Caco-2 (cell line): ENCODE measurements at regions of chr3 and their contacts with region 1.

Region 1: DNA sequence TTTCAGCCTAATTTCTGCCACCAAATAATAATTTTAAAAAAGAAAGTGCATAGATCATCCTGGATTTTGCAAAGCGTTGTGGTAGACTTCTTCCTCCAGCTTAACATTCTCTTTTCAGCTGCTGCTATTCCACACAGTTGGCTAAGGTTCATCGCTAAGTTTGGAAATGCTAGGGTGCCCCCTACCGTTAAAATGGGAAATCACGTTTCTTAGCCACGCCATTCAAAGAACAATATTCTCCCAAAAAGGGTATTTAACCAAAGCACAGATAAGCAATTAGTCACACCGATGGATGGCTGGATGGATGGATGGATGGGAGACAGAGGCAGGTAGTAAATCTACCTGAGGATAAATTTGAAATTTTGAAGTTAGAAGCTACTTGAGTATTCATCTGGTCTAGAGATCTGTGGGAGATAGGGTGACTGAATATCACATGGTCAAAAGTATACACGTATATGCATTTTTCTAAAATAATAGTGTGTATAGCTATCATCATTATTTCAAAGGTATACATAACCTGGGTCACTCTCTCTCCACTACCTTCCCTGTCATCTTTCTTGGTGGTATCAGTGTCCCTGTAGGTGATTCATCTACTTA is 67.2 kb downstream of the EFHB start:
- DNase-seq: peak in 1 of 2 experiments; percentile 67
- H3K4me3 ChIP-seq: no peak overlapping the region
- H3K4me3 Mint-ChIP-seq: no peak overlapping the region
- H3K27ac Mint-ChIP-seq: no peak overlapping the region
- H3K4me1 ChIP-seq: no peaks in the 10 kb centered on the region
- H3K4me1 Mint-ChIP-seq: no peaks in the 10 kb centered on the region
- H3K27me3 ChIP-seq: no peaks in the 10 kb centered on the region
- H3K27me3 Mint-ChIP-seq: peaks cover 11% of the 10 kb centered on the region
- CTCF ChIP-seq: peak; percentile 57 to 67

Region 2: GRCh38 chr3:19065027-19065426 is 801.8 kb before region 1 on chr3:
- CTCF ChIA-PET with region 1: no interaction called
- POLR2A ChIA-PET with region 1: no interaction called
- intact Hi-C with region 1: loop called (anchors 1 kb)
- DNase-seq: peak in 1 of 2 experiments; percentile 2
- H3K4me3 ChIP-seq: no peak overlapping the region
- H3K4me3 Mint-ChIP-seq: no peak overlapping the region
- H3K27ac Mint-ChIP-seq: no peak overlapping the region
- H3K4me1 ChIP-seq: no peaks in the 10 kb centered on the region
- H3K4me1 Mint-ChIP-seq: no peaks in the 10 kb centered on the region
- H3K27me3 ChIP-seq: no peaks in the 10 kb centered on the region
- H3K27me3 Mint-ChIP-seq: no peaks in the 10 kb centered on the region
- CTCF ChIP-seq: peak; percentile 45 to 58

Region 3: GRCh38 chr3:19348929-19349564 is 517.8 kb before region 1 on chr3:
- CTCF ChIA-PET with region 1: interaction called, 15 read pairs
- POLR2A ChIA-PET with region 1: no interaction called
- intact Hi-C with region 1: no loop called
- DNase-seq: peak in 1 of 2 experiments; percentile 23
- H3K4me3 ChIP-seq: no peak overlapping the region
- H3K4me3 Mint-ChIP-seq: no peak overlapping the region
- H3K27ac Mint-ChIP-seq: no peak overlapping the region
- H3K4me1 ChIP-seq: no peaks in the 10 kb centered on the region
- H3K4me1 Mint-ChIP-seq: no peaks in the 10 kb centered on the region
- H3K27me3 ChIP-seq: no peaks in the 10 kb centered on the region
- H3K27me3 Mint-ChIP-seq: peaks cover 15% of the 10 kb centered on the region
- CTCF ChIP-seq: peak; percentile 53 to 79

Region 4: DNA sequence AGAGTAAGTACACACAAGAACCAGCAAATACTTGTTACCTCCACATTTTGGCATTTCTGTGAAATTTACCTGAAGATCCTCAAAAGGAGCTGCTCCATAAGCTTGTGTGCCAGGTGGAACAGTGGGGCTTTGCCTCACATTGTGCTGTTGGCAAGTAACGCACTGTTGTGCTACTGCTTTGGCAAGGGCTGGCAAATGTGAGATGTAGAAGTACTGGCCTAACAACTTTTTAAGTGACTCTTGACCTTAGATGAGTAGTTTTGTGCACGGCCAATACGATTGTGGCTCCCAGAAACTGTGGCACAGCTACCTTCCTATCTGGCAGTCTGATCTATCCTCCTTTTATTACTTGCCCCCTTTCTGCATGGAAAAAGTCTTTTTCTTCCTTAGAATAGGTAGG is 381.6 kb before region 1 on chr3:
- CTCF ChIA-PET with region 1: no interaction called
- POLR2A ChIA-PET with region 1: no interaction called
- intact Hi-C with region 1: loop called (anchors 10 kb)
- DNase-seq: no peak
- H3K4me3 ChIP-seq: no peak overlapping the region
- H3K4me3 Mint-ChIP-seq: no peak overlapping the region
- H3K27ac Mint-ChIP-seq: no peak overlapping the region
- H3K4me1 ChIP-seq: no peaks in the 10 kb centered on the region
- H3K4me1 Mint-ChIP-seq: no peaks in the 10 kb centered on the region
- H3K27me3 ChIP-seq: no peaks in the 10 kb centered on the region
- H3K27me3 Mint-ChIP-seq: peaks cover 6% of the 10 kb centered on the region
- CTCF ChIP-seq: no peak

Region 5: DNA sequence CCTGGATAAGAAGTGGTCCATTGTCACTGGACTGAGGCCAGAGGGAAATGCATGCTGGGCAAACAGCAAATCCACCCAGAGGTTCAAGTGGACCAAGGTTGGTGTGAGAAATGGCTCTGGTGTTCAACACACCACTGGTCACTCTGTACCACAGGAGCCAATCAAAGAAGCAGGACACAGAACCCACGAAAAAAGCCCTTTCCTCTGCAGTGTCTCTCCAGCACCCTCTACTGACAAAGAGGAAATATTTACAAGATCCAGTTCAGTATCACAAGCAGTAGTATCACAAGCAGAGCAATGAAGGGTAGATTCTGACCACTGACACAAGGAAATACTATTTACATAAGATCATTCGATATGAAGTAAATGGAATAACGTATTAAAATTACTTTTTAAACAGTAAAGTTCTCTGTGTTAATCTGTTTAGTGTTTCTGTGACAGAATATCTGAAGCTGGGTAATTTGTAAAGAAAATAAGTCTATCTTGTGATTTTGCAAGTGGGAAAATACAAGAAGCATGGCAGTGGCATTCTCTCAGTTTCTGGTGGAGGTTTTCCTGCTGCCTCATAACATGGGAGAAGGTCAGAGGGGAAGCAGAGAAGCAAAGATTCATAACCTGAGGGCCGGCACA is 323.5 kb before region 1 on chr3:
- CTCF ChIA-PET with region 1: no interaction called
- POLR2A ChIA-PET with region 1: no interaction called
- intact Hi-C with region 1: loop called (anchors 1 kb)
- DNase-seq: peak; percentile 18 to 36
- H3K4me3 ChIP-seq: no peak overlapping the region
- H3K4me3 Mint-ChIP-seq: no peak overlapping the region
- H3K27ac Mint-ChIP-seq: no peak overlapping the region
- H3K4me1 ChIP-seq: no peaks in the 10 kb centered on the region
- H3K4me1 Mint-ChIP-seq: no peaks in the 10 kb centered on the region
- H3K27me3 ChIP-seq: no peaks in the 10 kb centered on the region
- H3K27me3 Mint-ChIP-seq: peaks cover 3% of the 10 kb centered on the region
- CTCF ChIP-seq: peak; percentile 56 to 64

Region 6: DNA sequence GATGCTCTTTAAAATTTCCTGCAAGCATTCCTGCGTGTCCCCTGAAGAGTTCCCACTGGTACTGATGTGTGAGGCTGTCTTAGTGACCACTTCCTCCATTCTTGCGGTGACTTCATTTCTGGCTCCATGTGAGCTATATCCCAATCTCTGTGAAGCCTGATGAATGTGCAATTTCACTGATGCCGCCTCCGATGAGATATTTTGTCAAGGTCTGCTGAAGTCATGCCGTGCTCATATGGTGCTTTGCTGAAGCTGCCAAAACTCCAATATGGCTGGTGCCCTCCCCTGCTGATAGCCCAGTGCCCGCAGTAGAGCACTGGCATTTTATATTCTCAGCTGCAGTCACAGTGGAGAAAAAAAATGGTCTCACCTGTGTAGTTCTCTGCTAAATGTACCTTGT is 204.4 kb before region 1 on chr3:
- CTCF ChIA-PET with region 1: interaction called, 3 read pairs
- POLR2A ChIA-PET with region 1: no interaction called
- intact Hi-C with region 1: loop called (anchors 10 kb)
- DNase-seq: no peak
- H3K4me3 ChIP-seq: no peak overlapping the region
- H3K4me3 Mint-ChIP-seq: no peak overlapping the region
- H3K27ac Mint-ChIP-seq: no peak overlapping the region
- H3K4me1 ChIP-seq: no peaks in the 10 kb centered on the region
- H3K4me1 Mint-ChIP-seq: no peaks in the 10 kb centered on the region
- H3K27me3 ChIP-seq: no peaks in the 10 kb centered on the region
- H3K27me3 Mint-ChIP-seq: peaks cover 3% of the 10 kb centered on the region
- CTCF ChIP-seq: no peak

Region 7: GRCh38 chr3:19725000-19725399 is 141.8 kb before region 1 on chr3:
- CTCF ChIA-PET with region 1: interaction called, 3 read pairs
- POLR2A ChIA-PET with region 1: no interaction called
- intact Hi-C with region 1: loop called (anchors 1 kb)
- DNase-seq: no peak
- H3K4me3 ChIP-seq: no peak overlapping the region
- H3K4me3 Mint-ChIP-seq: no peak overlapping the region
- H3K27ac Mint-ChIP-seq: no peak overlapping the region
- H3K4me1 ChIP-seq: no peaks in the 10 kb centered on the region
- H3K4me1 Mint-ChIP-seq: no peaks in the 10 kb centered on the region
- H3K27me3 ChIP-seq: no peaks in the 10 kb centered on the region
- H3K27me3 Mint-ChIP-seq: peaks cover 3% of the 10 kb centered on the region
- CTCF ChIP-seq: no peak

Region 8: DNA sequence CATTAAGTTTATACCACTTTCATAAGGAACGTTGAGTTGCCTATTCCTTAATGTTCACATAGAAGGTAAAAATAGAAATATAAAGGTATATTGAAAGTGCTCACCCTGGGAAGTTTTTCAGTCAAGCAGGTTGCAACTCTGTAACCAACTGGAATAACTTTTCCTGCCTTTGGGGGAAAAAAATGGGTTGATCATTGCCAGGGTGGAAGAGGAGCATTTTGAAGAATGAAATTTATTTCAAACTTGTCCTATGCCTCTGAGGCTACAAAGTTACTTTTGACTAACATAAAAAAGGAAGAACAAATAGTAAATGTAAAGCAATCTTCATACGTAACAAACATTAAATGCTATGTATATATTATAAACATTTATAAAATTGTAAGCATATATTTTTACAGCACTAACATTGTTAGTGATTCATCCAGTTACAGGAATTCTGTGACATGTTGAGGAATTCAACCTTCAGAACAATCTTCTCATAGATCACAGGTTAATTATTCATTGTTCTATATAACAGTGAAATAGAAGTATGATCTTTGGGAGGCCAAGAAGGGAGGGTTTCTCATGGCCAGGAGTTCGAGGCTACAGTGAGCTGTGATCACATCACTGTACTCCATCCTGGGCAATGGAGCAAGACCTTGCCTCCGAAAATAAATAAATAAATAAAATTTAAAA is 53.7 kb after region 1 on chr3:
- CTCF ChIA-PET with region 1: no interaction called
- POLR2A ChIA-PET with region 1: no interaction called
- intact Hi-C with region 1: no loop called
- DNase-seq: no peak
- H3K4me3 ChIP-seq: no peak overlapping the region
- H3K4me3 Mint-ChIP-seq: no peak overlapping the region
- H3K27ac Mint-ChIP-seq: no peak overlapping the region
- H3K4me1 ChIP-seq: no peaks in the 10 kb centered on the region
- H3K4me1 Mint-ChIP-seq: no peaks in the 10 kb centered on the region
- H3K27me3 ChIP-seq: no peaks in the 10 kb centered on the region
- H3K27me3 Mint-ChIP-seq: no peaks in the 10 kb centered on the region
- CTCF ChIP-seq: no peak

Region 9: DNA sequence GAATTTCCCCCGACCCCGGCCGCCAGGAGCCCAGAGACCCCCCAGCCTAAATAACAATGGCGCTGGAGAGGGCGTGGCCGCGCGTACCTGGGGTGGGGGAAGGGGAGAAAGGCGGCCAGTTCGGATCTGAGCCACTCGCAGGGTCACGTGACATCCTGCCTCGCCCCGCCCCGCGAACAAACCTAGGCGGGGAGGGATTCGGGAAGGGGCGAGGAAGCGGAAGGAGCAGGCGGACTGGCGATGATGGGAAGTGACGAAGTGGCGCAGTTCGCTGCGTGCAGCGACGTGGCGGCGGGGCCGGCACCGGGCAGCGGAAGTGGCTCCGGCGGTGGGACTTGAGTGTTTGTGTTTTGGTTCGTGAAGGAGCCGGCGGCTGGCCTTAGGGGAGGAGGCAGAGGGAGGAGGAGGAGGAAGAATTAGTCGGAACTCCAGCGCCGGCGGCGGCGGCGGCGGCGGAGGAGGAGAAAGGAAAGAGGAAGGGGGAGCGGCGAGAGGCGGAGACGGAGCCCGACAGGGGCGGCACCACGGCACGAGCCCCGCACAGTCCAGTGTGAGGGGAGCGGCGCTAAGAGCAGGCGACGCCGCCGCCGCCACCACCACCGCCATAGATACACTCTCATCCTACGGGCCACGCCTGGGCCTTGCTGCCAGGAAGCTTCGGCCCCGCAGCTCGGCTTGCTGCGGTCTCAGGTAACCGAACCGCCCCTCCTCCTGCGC is 80.1 kb after region 1 on chr3 and contains the start of gene RAB5A:
- CTCF ChIA-PET with region 1: no interaction called
- POLR2A ChIA-PET with region 1: no interaction called
- intact Hi-C with region 1: no loop called
- DNase-seq: peak; percentile 97
- H3K4me3 ChIP-seq: peak within 1 kb of the TSS; percentile 96
- H3K4me3 Mint-ChIP-seq: peak within 1 kb of the TSS; percentile 80
- H3K27ac Mint-ChIP-seq: peak within 1 kb of the TSS; percentile 86
- H3K4me1 ChIP-seq: peaks cover 12% of the 10 kb centered on the region
- H3K4me1 Mint-ChIP-seq: peaks cover 6% of the 10 kb centered on the region
- H3K27me3 ChIP-seq: no peaks in the 10 kb centered on the region
- H3K27me3 Mint-ChIP-seq: no peaks in the 10 kb centered on the region
- CTCF ChIP-seq: no peak
- total RNA-seq, gene RAB5A: 63.1 and 69.5 TPM in 2 replicates